CD8-positive, alpha-beta memory T cell (primary cell): ENCODE measurements at regions of chr11 and their contacts with region 1.

Region 1: GRCh38 chr11:77091146-77091940 is 11.3 kb upstream of the OMP start:
- DNase-seq: peak; percentile 61 to 85 (median 64)
- H3K4me3 ChIP-seq: no peak overlapping the region
- H3K4me3 Mint-ChIP-seq: no peak overlapping the region
- H3K27ac ChIP-seq: no peak overlapping the region
- H3K27ac Mint-ChIP-seq: no peak overlapping the region
- H3K4me1 ChIP-seq: no peaks in the 10 kb centered on the region
- H3K4me1 Mint-ChIP-seq: peaks cover 0 to 4% (median 4%) of the 10 kb centered on the region in 3 donors
- H3K27me3 ChIP-seq: no peaks in the 10 kb centered on the region
- H3K27me3 Mint-ChIP-seq: no peaks in the 10 kb centered on the region

Region 2: DNA sequence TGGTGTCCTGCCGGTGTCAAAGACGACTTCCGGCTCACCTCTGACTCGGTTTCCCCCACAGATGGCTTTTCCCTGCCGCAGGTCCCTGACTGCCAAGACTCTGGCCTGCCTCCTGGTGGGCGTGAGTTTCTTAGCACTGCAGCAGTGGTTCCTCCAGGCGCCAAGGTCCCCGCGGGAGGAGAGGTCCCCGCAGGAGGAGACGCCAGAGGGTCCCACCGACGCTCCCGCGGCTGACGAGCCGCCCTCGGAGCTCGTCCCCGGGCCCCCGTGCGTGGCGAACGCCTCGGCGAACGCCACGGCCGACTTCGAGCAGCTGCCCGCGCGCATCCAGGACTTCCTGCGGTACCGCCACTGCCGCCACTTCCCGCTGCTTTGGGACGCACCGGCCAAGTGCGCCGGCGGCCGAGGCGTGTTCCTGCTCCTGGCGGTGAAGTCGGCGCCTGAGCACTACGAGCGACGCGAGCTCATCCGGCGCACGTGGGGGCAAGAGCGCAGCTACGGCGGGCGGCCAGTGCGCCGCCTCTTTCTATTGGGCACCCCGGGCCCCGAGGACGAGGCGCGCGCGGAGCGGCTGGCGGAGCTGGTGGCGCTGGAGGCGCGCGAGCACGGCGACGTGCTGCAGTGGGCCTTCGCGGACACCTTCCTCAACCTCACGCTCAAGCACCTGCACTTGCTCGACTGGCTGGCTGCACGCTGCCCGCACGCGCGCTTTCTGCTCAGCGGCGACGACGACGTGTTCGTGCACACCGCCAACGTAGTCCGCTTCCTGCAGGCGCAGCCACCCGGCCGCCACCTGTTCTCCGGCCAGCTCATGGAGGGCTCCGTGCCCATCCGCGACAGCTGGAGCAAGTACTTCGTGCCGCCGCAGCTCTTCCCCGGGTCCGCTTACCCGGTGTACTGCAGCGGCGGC is 51.6 kb before region 1 on chr11:
- CTCF ChIA-PET with region 1: interaction called, 31 read pairs
- POLR2A ChIA-PET with region 1: no interaction called
- DNase-seq: peak in 1 of 5 donors; percentile 19
- H3K4me3 ChIP-seq: no peak overlapping the region
- H3K4me3 Mint-ChIP-seq: peak overlapping the region in 4 of 7 donors; percentile 15 to 75 (median 60)
- H3K27ac ChIP-seq: no peak overlapping the region
- H3K27ac Mint-ChIP-seq: peak overlapping the region in 1 of 8 donors; percentile 21
- H3K4me1 ChIP-seq: no peaks in the 10 kb centered on the region
- H3K4me1 Mint-ChIP-seq: peaks cover 6 to 13% (median 8%) of the 10 kb centered on the region in 3 donors
- H3K27me3 ChIP-seq: peaks cover 3% of the 10 kb centered on the region
- H3K27me3 Mint-ChIP-seq: peaks cover 45 to 65% of the 10 kb centered on the region in 2 donors

Region 3: DNA sequence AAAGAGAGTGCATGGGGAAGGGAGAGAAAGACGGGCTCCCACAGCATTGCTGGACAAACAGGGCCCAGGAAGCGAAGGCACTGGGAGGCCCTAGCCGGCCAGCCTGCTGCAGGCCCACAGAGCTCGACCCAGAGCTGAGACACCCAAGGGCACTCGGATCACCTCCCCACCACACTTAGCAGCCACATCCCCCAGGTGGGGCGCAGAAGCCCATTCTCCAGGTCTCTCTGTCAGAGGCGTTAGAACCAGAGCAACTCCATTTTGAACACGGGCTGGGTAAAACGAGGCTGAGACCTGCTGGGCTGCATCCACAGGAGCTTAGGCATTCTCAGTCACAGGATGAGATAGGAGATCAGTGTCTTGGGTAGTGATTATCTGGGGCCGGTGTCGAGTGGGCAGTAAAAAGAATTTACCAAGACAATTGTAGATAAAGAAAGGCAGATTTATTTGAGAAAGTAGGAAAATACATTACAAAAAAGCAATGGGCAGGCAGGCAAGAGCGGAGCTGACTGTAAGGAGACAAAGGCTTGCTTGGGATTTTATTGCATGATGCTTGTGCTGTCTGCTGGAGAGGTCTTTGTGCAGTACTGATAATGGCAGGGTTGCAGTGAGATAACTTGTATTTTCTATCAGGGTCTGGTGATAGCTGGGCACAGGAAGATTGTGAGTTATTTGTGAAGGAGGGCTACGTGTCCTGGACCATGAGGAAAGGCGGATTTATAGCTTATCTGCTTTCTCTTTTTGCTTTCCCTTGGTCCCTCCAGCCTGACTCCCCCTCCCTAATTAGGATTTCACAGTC is 37.9 kb before region 1 on chr11:
- CTCF ChIA-PET with region 1: interaction called, 75 read pairs
- POLR2A ChIA-PET with region 1: no interaction called
- DNase-seq: no peak
- H3K4me3 ChIP-seq: no peak overlapping the region
- H3K4me3 Mint-ChIP-seq: no peak overlapping the region
- H3K27ac ChIP-seq: no peak overlapping the region
- H3K27ac Mint-ChIP-seq: no peak overlapping the region
- H3K4me1 ChIP-seq: no peaks in the 10 kb centered on the region
- H3K4me1 Mint-ChIP-seq: no peaks in the 10 kb centered on the region
- H3K27me3 ChIP-seq: no peaks in the 10 kb centered on the region
- H3K27me3 Mint-ChIP-seq: peaks cover 0 to 2% of the 10 kb centered on the region in 2 donors

Region 4: GRCh38 chr11:77107950-77108349 is 16.6 kb after region 1 on chr11:
- CTCF ChIA-PET with region 1: interaction called, 19 read pairs
- POLR2A ChIA-PET with region 1: no interaction called
- DNase-seq: no peak
- H3K4me3 ChIP-seq: no peak overlapping the region
- H3K4me3 Mint-ChIP-seq: no peak overlapping the region
- H3K27ac ChIP-seq: no peak overlapping the region
- H3K27ac Mint-ChIP-seq: peak overlapping the region in 1 of 8 donors; percentile 70
- H3K4me1 ChIP-seq: no peaks in the 10 kb centered on the region
- H3K4me1 Mint-ChIP-seq: no peaks in the 10 kb centered on the region
- H3K27me3 ChIP-seq: no peaks in the 10 kb centered on the region
- H3K27me3 Mint-ChIP-seq: no peaks in the 10 kb centered on the region

Region 5: GRCh38 chr11:77299528-77299993 is 208.2 kb after region 1 on chr11:
- CTCF ChIA-PET with region 1: no interaction called
- POLR2A ChIA-PET with region 1: no interaction called
- DNase-seq: no peak
- H3K4me3 ChIP-seq: no peak overlapping the region
- H3K4me3 Mint-ChIP-seq: no peak overlapping the region
- H3K27ac ChIP-seq: no peak overlapping the region
- H3K27ac Mint-ChIP-seq: no peak overlapping the region
- H3K4me1 ChIP-seq: no peaks in the 10 kb centered on the region
- H3K4me1 Mint-ChIP-seq: no peaks in the 10 kb centered on the region
- H3K27me3 ChIP-seq: no peaks in the 10 kb centered on the region
- H3K27me3 Mint-ChIP-seq: peaks cover 0 to 6% of the 10 kb centered on the region in 2 donors